WTC11 (cell line): ENCODE measurements at regions of chr17 and their contacts with region 1.

Region 1: GRCh38 chr17:43673516-43674323 is 12.0 kb upstream of the MEOX1 start:
- DNase-seq: peak; percentile 83
- ATAC-seq: peak; percentile 41
- H3K4me3 Mint-ChIP-seq: no peak overlapping the region
- H3K27ac Mint-ChIP-seq: 0 out of 2 replicates have a peak overlapping the region, but pooled peaks have one; percentile 80
- H3K4me1 Mint-ChIP-seq: peaks cover 66% of the 10 kb centered on the region
- H3K27me3 Mint-ChIP-seq: no peaks in the 10 kb centered on the region
- CTCF ChIP-seq: peak; percentile 90

Region 2: DNA sequence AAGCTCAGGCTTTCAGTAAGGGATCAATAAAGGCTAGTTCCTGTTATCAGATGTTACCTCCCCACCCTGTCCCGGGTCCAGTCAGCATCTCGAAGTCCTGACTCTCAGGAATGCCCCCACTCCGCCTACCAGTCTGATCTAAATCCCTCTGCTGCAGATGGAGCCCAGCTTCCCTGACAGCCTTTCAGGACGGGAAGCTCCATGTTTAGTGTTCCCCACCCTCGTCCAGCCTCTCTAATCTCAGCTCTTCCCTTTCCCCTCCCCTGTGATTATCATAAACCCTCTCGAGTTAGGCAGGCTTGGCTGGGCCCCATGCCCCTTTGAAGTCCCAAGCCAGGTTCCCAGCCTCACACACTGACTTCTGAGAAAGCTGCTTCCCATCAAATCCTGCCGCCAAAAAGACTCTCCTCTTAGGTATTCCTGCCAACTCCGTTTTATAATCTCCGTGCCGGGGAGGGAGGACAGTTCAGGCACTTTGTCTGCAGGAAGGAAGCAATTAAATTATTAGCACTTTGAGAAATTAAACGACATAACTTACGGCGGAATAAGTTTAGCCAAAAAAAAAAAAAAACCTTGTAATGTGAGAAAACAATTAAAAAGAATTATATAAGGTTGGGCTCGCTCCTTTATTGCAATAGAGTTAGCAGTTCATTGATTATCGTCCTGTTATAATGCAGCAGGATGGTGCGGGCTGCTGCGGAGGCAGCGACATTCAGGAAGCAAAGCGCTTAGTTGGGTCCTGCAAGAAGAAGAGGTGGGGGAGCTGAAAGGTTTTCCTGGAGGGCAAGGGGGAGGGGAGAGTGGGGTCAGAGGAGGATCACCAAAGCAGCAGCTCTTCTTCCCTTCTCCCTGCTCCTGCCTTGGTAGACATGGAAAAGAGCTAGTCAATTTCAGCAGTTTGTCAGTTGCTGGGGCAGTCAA is 110.8 kb before region 1 on chr17:
- CTCF ChIA-PET with region 1: interaction called, 18 read pairs
- POLR2A ChIA-PET with region 1: no interaction called
- DNase-seq: no peak
- ATAC-seq: peak; percentile 67
- H3K4me3 Mint-ChIP-seq: peak overlapping the region; percentile 53
- H3K27ac Mint-ChIP-seq: no peak overlapping the region
- H3K4me1 Mint-ChIP-seq: peaks cover 36% of the 10 kb centered on the region
- H3K27me3 Mint-ChIP-seq: peaks cover 7% of the 10 kb centered on the region
- CTCF ChIP-seq: no peak

Region 3: GRCh38 chr17:43591779-43592562 is 81.7 kb before region 1 on chr17:
- CTCF ChIA-PET with region 1: interaction called, 10 read pairs
- POLR2A ChIA-PET with region 1: no interaction called
- DNase-seq: no peak
- ATAC-seq: peak; percentile 43
- H3K4me3 Mint-ChIP-seq: no peak overlapping the region
- H3K27ac Mint-ChIP-seq: no peak overlapping the region
- H3K4me1 Mint-ChIP-seq: peaks cover 22% of the 10 kb centered on the region
- H3K27me3 Mint-ChIP-seq: peaks cover 7% of the 10 kb centered on the region; the same call in 1 of the 2 replicates
- CTCF ChIP-seq: no peak

Region 4: DNA sequence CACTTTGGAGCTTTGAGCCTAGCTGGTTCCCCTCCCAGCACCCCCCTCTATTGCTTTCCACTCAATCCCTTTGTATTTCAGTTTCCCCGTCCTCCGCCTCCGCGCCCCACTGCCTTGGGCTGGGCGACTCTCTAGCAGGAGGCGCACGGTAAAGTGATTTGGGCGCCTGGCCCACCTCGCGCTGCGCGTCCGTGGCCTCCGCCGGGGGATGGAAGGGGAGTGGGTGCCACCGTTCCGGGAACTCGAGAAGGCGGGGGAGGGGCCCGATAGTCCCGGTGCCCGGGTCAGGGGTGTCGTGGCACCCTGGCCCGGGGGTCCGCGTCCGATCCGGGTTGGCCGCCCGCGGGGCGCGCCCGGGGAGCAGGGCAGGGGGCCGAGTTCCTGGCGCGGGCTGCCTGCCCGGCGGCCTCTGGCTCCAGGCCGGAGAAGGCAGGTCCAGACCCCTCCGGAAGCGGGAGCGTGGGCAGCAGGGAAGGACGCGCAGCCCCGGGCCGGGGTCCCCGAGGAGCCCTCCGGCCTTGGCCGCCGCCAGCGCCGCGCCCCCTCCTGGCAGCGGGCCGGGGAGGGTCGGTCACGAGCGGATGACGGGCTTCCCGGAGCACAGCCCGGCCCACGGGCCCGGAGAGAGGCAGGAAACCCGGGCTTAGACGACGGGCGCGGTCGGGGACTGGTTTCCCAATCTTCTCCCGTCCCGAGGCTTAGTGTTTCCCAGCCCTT is 27.8 kb before region 1 on chr17:
- CTCF ChIA-PET with region 1: interaction called, 13 read pairs
- POLR2A ChIA-PET with region 1: no interaction called
- DNase-seq: peak; percentile 60
- ATAC-seq: peak; percentile 75
- H3K4me3 Mint-ChIP-seq: peak overlapping the region; percentile 62
- H3K27ac Mint-ChIP-seq: no peak overlapping the region
- H3K4me1 Mint-ChIP-seq: peaks cover 9% of the 10 kb centered on the region
- H3K27me3 Mint-ChIP-seq: peaks cover 10% of the 10 kb centered on the region
- CTCF ChIP-seq: no peak

Region 5: DNA sequence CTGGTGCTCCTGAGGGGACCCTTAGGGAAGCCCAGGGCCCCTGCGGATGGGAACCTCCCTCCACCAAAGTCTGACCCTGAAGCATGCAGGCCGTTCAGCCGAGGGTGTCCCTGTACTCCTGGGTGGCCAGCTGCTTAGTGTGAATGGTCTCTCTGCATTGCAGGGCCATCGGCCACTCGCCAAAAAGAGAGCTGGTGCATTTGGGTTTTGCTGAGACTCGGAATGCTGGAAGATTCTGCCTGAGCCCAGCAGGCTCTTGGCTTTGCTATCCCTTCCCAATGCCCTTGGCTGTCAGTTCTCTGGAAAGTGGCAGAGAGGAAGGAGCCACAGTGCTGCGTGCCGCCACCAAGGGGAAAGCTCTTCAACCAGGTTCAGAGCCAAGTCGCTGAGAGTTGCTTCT is 14.8 kb before region 1 on chr17:
- CTCF ChIA-PET with region 1: interaction called, 29 read pairs
- POLR2A ChIA-PET with region 1: no interaction called
- DNase-seq: no peak
- ATAC-seq: no peak
- H3K4me3 Mint-ChIP-seq: no peak overlapping the region
- H3K27ac Mint-ChIP-seq: peak overlapping the region; percentile 60; the same call in 1 of the 2 replicates
- H3K4me1 Mint-ChIP-seq: peaks cover 53% of the 10 kb centered on the region
- H3K27me3 Mint-ChIP-seq: no peaks in the 10 kb centered on the region; the same call in 1 of the 2 replicates
- CTCF ChIP-seq: no peak

Region 6: DNA sequence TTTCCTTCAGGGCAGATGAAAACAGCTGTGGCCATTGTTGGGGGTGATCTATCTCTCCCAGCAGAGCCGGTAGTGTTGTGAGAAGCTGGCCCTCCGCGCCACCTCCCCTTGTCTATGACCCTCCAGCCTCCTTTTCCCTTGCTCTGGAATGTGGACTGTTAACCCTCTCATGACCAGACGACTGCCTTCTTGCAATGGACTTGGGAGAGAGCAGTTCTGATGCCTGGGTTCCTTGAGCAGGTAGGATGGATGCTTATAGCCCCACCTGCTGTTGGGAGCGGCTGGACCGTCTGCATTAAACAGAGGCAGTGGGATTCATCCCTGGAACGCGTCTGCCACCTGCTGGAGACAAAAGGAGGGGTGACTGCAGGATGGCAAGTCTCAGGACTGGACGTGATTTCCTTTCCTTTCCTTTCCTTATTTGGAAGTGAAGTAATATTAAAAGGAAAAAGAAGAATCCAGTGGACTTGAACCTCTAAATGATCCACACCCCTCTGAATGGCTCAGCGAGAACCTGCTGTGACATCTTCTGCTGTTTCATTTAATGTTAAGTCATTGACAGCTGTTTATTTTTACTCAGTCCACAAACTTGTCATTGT is 86.6 kb after region 1 on chr17:
- CTCF ChIA-PET with region 1: interaction called, 20 read pairs
- POLR2A ChIA-PET with region 1: no interaction called
- DNase-seq: peak; percentile 99
- ATAC-seq: peak; percentile 81
- H3K4me3 Mint-ChIP-seq: peak overlapping the region; percentile 28
- H3K27ac Mint-ChIP-seq: no peak overlapping the region
- H3K4me1 Mint-ChIP-seq: peaks cover 36% of the 10 kb centered on the region
- H3K27me3 Mint-ChIP-seq: peaks cover 18% of the 10 kb centered on the region
- CTCF ChIP-seq: peak; percentile 94